Motor neuron (in vitro differentiated cells): ENCODE measurements at regions of chr7 and their contacts with region 1.

Region 1: GRCh38 chr7:82810558-82811259 is 352.0 kb downstream of the PCLO start:
- ATAC-seq: peak; percentile 67 to 96 (median 78)
- H3K4me3 ChIP-seq: no peak overlapping the region
- H3K27ac ChIP-seq: no peak overlapping the region
- H3K4me1 ChIP-seq: peaks cover 0 to 1% of the 10 kb centered on the region in 2 donors

Region 2: DNA sequence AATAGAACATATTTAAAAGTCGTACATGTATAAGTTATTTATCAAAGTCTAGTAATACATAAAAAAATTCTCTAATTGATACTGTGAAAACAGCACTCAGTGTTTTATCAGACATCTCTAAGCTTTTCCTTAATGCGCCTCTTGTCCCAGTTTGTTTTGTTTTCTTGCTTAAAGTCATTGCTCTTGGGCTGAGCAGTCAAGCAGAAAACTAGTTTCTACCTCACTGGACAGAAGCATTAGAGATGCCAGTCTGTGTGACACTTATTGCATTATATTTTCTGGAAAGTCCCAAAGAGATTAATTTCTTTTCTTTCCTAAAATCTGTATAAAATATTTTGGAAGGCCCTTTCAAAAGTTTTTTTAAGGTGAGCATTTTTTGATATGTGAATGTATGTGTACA is 115.8 kb after region 1 on chr7:
- in situ Hi-C with region 1: no loop called
- ATAC-seq: peak in 1 of 8 experiments; percentile 37
- H3K4me3 ChIP-seq: no peak overlapping the region
- H3K27ac ChIP-seq: no peak overlapping the region
- H3K4me1 ChIP-seq: no peaks in the 10 kb centered on the region

Region 3: DNA sequence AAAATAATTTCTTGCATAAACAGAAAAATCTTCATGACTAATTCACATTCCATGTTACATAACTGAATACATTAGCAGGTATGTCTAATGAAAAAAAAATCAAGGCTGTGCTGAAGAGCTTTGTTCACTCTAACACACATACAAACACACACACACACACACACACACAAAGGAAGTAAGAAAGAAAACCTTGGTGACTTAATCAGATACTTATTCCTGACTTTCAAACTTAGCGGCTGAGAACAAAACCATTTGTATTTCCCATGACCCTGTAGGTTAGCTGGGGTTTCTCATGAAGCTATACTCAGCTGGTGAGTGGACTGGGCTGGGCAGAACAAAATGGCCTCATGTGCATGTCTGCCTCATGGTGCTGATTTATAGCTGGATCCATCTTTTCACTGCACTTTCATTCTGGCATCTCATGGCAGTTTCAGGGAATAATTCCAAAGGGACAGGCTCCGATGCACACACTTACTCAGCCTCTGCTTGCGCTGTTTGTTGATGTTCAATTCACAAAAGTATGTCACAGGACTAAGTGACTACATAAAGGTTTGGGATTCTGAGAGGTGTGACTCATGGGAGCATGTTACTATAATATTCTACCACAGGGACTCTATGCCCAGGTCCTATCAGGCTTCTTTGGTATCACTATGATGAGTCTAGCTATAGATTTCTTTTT is 190.8 kb after region 1 on chr7:
- in situ Hi-C with region 1: no loop called
- ATAC-seq: no peak
- H3K4me3 ChIP-seq: no peak overlapping the region
- H3K27ac ChIP-seq: no peak overlapping the region
- H3K4me1 ChIP-seq: no peaks in the 10 kb centered on the region

Region 4: GRCh38 chr7:83365746-83366145 is 555.0 kb after region 1 on chr7:
- in situ Hi-C with region 1: loop called in 1 of 9 experiments (anchors 25 kb)
- ATAC-seq: no peak
- H3K4me3 ChIP-seq: no peak overlapping the region
- H3K27ac ChIP-seq: no peak overlapping the region
- H3K4me1 ChIP-seq: no peaks in the 10 kb centered on the region